Uterus (tissue), 4 donors: ENCODE measurements at regions of chr10 and their contacts with region 1.

Region 1: GRCh38 chr10:119742947-119743648 is 17.2 kb downstream of the INPP5F start:
- DNase-seq: no peak
- H3K4me3 ChIP-seq: no peak overlapping the region
- H3K27ac ChIP-seq: no peak overlapping the region
- H3K4me1 ChIP-seq: peaks cover 0 to 3% of the 10 kb centered on the region in 2 donors
- H3K27me3 ChIP-seq: no peaks in the 10 kb centered on the region
- CTCF ChIP-seq: no peak
- POLR2A ChIP-seq: no peak

Region 2: GRCh38 chr10:119859420-119860258 is 116.5 kb after region 1 on chr10:
- intact Hi-C with region 1: loop called (anchors 10 kb)
- DNase-seq: no peak
- H3K4me3 ChIP-seq: no peak overlapping the region
- H3K27ac ChIP-seq: no peak overlapping the region
- H3K4me1 ChIP-seq: no peaks in the 10 kb centered on the region
- H3K27me3 ChIP-seq: no peaks in the 10 kb centered on the region
- CTCF ChIP-seq: peak; percentile 51 to 64 (median 56)
- POLR2A ChIP-seq: no peak